ENCODE measurements at regions of chr9 and their contacts with region 1.

Region 1: GRCh38 chr9:74773886-74774479 is 113.7 kb downstream of the TRPM6 start:
- DNase-seq: peak; percentile 90
- H3K4me3 Mint-ChIP-seq: no peak overlapping the region
- H3K27ac Mint-ChIP-seq: peak overlapping the region; percentile 13
- H3K4me1 Mint-ChIP-seq: peaks cover 13% of the 10 kb centered on the region
- H3K27me3 Mint-ChIP-seq: peaks cover 13% of the 10 kb centered on the region

Region 2: DNA sequence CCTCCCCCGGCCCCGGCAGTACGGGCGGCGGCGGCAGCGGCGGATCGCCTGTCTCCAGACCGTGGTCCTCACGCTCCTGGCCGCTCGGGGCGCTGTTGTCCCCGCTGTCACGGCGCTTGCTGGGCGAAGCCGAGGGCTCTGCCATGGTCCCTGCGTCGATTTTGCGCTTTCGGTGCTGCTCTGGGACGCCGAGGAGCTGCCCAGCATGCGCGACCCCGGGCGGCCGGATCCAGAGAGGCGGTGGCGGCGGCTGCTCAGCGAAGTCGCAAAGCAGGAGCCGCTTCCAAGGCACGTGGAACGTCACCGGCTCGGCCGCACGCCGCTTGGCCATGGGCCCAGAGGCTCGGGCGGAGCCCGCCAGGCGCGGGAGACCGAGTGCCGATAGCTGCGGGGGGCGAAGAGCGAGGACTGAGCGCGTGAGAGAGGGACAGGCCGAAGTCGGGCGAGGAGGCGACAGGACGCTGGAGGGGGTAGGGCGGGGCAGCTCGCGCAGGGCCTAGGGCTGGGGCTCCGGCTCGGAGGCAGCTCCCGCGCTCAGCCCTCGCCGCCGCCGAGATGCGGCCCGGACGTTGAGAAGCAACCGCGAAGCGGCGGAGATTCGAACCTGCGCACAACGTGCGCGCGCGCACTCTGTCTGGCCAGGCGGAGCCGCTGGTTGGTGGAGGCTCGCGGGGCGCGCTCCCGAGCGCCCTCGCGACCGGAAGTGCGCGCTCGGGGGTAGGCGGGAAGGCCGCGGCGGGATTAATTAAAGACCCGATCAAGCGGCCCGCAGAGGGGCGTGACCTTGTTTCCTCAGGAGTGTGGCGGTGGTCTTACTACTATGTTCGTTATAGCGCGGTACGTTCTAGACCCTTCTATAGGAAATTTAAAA is 178.5 kb after region 1 on chr9 and contains the start of gene C9orf40:
- intact Hi-C with region 1: loop called (anchors 2 kb)
- DNase-seq: peak; percentile 97
- H3K4me3 Mint-ChIP-seq: peak within 1 kb of the TSS; percentile 98
- H3K27ac Mint-ChIP-seq: peak within 1 kb of the TSS; percentile 97
- H3K4me1 Mint-ChIP-seq: peaks cover 39% of the 10 kb centered on the region
- H3K27me3 Mint-ChIP-seq: no peaks in the 10 kb centered on the region
- total RNA-seq, gene C9orf40: 19.6 and 20.0 TPM in 2 replicates

Region 3: GRCh38 chr9:75001719-75002422 is 227.9 kb after region 1 on chr9:
- intact Hi-C with region 1: loop called (anchors 1 kb)
- DNase-seq: peak; percentile 77
- H3K4me3 Mint-ChIP-seq: no peak overlapping the region
- H3K27ac Mint-ChIP-seq: no peak overlapping the region
- H3K4me1 Mint-ChIP-seq: peaks cover 4% of the 10 kb centered on the region
- H3K27me3 Mint-ChIP-seq: no peaks in the 10 kb centered on the region

Region 4: GRCh38 chr9:75148561-75148960 is 374.6 kb after region 1 on chr9:
- intact Hi-C with region 1: loop called (anchors 2 kb)
- DNase-seq: peak; percentile 80
- H3K4me3 Mint-ChIP-seq: peak overlapping the region; percentile 62
- H3K27ac Mint-ChIP-seq: peak overlapping the region; percentile 85
- H3K4me1 Mint-ChIP-seq: peaks cover 63% of the 10 kb centered on the region
- H3K27me3 Mint-ChIP-seq: no peaks in the 10 kb centered on the region

Region 5: DNA sequence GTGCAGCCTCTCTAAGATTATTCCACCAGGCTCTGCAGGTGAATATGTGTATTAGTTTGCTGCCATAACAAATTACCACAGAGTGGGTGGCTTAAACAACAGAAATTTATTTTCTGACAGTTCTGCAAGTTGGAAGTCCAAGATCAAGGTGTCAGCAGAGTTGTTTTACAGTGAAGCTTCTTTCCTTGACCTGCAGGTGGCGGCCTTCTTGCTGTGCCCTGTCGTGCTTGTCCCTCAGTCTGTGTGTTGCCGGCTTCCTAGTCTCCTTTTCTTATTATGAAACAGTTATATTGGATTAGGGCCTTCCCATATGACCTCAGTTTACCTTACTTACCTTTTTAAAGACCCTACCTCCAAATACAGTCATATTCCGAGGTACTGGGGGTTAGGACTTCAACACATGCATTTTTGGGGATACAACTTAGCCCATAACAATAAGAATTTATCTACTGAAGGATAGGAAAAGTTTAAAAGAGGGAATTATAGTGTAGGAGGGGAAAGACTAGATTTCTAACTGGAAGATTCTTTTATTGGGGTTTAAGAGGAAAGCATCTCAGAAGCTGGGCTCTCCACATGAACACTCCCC is 411.7 kb after region 1 on chr9:
- intact Hi-C with region 1: loop called (anchors 10 kb)
- DNase-seq: peak; percentile 82
- H3K4me3 Mint-ChIP-seq: no peak overlapping the region
- H3K27ac Mint-ChIP-seq: no peak overlapping the region
- H3K4me1 Mint-ChIP-seq: peaks cover 9% of the 10 kb centered on the region
- H3K27me3 Mint-ChIP-seq: peaks cover under 1% of the 10 kb centered on the region

Region 6: DNA sequence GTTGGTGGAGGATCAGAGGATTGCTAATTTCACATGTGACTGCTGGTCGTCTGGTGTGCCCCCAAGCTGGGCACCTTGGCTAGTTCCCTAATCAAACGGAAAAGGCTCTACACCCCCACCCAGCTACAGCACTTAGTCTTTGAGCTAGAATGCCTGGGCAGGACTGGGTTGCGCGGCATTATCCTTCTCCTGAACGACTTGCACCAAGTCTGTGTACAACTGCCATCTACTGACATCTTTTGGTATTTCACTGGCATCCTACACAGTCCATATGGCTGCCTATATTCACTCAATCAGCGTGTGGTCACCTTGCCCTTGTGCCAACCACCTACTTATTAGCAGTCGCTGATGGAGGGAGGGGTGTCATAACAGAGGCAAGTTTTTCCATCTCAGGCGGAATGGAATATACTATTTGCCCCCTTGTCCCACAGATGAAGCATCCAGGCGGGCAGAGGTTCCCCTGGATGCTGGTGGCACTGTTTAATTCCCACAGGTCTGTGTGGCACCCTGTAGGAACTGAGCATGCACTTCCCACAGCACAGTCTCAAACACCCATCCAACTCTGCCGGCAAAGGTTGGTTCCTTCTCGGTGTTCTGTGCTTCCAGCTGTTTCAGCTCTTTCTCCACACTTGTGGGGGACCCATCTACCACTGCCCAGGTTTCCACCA is 464.5 kb after region 1 on chr9:
- intact Hi-C with region 1: loop called (anchors 5 kb)
- DNase-seq: peak; percentile 81
- H3K4me3 Mint-ChIP-seq: no peak overlapping the region
- H3K27ac Mint-ChIP-seq: no peak overlapping the region
- H3K4me1 Mint-ChIP-seq: no peaks in the 10 kb centered on the region
- H3K27me3 Mint-ChIP-seq: no peaks in the 10 kb centered on the region

Region 7: DNA sequence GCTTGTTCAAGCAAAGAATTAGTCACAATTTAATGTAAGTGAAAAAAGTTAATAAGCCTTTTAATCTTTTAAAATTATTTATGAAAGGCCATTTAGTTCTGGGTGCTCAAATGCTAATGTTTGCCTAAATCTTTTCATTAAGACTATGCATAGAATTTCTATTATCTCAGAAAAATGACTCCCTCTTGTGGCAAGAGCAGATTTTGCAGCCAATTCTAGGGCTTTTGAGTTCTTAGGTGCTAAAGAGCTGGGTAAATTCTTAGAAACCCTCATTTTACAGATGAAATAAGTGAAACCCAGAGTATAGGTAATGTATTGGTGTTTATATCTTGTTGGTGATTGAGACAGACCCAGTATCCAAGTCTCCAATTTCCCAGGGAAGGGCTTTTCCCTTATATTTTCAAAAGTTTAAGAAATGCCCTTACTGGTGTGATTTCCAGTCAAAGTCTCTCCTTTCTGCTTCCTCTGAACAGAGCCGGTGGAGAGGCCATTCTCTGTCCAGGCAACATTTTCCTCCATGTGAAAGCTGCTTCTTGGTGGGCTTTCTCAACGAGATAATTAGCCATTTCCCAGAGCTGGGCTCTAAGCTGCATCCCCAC is 1092.4 kb after region 1 on chr9:
- intact Hi-C with region 1: loop called (anchors 5 kb)
- DNase-seq: peak; percentile 81
- H3K4me3 Mint-ChIP-seq: no peak overlapping the region
- H3K27ac Mint-ChIP-seq: no peak overlapping the region
- H3K4me1 Mint-ChIP-seq: no peaks in the 10 kb centered on the region
- H3K27me3 Mint-ChIP-seq: peaks cover 8% of the 10 kb centered on the region

Measured in activated CD4-positive, alpha-beta T cell treated with anti-CD3 and anti-CD28 coated beads, Interleukin-2, amount 10 ng/mL, durations not matched to agents 24 days and 14 days (primary cell).